ENCODE measurements at regions of chr4 and their contacts with region 1.

Region 1: DNA sequence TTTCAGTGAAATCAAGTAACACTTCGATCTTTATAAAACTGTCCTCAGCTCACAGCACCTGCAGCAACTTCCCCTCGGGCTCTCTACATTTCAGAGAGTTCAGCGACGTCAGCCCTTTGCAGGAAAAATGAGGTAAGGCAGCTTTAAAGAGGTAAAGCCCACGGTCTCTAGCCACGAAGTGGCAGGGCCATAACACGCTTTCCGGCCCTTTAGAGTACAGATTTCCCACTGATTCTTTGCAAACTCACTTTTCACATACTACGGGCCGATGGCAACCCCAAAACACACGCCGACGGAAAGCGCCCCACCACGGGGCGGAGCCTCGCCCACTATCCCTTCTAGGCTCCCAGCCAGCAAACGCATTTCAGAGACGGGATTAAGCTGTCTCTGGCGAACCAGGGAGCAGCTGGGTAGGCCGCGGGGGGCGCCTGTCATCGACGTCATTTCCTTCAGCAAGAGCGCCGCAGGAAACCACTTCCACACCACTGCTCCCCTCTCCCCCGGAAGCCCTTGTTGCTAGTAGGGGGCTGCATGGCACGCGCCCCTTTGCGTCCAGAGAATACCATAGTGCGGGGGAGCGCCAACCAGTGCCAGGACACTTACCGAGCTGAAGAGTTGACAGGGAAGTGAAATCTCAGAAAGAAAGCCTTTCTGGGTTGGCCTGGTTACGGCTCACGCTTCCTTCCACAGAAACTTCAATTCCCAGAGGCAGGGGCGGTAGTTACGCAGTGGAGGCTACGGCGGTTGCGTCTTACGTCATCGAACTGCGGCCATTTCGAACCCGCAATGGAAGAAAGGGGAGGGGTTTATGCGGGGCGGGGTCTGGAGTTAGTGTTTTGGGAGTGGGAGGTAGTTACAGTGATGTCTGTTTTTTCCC is at the start of gene TRMT10A:
- DNase-seq: peak; percentile 99
- ATAC-seq: peak; percentile 99
- total RNA-seq, gene TRMT10A: 4.5 TPM

Region 2: DNA sequence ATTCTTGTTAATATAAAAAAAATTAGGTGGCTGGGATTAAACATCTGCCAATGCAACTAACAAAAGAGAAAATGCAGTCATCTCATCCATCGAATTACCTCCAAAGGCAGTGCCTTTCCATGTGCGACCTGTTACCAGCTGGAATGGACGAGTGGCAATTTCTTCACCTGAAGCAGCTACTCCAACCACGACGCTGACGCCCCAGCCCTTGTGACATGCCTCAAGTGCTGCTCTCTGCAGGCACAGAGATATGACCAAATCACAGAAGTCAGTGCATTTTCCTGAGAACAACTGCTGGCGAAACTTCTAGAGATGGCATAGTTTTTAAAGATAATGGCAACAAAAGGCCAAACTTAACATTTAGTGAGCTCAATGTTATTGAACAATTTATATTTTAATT is 488.7 kb before region 1 on chr4:
- intact Hi-C with region 1: no loop called
- DNase-seq: no peak
- ATAC-seq: no peak

Region 3: GRCh38 chr4:99755223-99755944 is 191.8 kb after region 1 on chr4:
- intact Hi-C with region 1: no loop called
- DNase-seq: no peak
- ATAC-seq: peak; percentile 70

Region 4: GRCh38 chr4:99808260-99808857 is 244.8 kb after region 1 on chr4:
- intact Hi-C with region 1: loop called (anchors 2 kb)
- DNase-seq: peak; percentile 76
- ATAC-seq: peak; percentile 87

Region 5: GRCh38 chr4:99885063-99885664 is 321.6 kb after region 1 on chr4:
- intact Hi-C with region 1: loop called (anchors 5 kb)
- DNase-seq: no peak
- ATAC-seq: peak; percentile 51

Region 6: GRCh38 chr4:99949034-99949998 is 385.8 kb after region 1 on chr4:
- intact Hi-C with region 1: loop called (anchors 5 kb)
- DNase-seq: peak; percentile 88
- ATAC-seq: peak; percentile 47

Measured in Right ventricle myocardium superior (tissue), 1 donor.